ENCODE measurements at regions of chr6 and their contacts with region 1.

Region 1: DNA sequence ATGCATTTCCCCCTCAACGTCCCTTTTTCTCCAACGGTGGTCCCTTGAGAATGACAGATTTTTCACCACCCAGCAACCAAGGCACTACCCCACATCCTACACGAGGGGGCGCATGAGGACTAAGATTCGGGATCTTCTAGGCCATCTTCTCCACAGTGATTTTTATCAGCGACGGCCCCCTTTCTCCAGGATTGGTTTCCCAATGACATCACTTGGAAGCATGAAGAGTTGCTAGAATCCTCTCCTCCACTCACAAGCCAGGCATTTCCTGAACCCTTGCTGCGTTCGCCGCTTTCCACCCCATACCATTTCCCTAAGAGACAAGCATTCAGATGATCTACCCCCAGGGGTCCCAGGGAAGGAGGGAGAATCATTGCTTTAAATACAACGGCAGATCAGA is 252.0 kb downstream of the HIVEP2 start:
- DNase-seq: peak in 3 of 4 donors; percentile 59 to 75 (median 65)
- ATAC-seq: peak; percentile 86
- H3K4me3 ChIP-seq: no peak overlapping the region
- H3K27ac ChIP-seq: no peak overlapping the region
- H3K4me1 ChIP-seq: peaks cover 5 to 29% of the 10 kb centered on the region in 2 donors
- H3K27me3 ChIP-seq: no peaks in the 10 kb centered on the region
- CTCF ChIP-seq: peak; percentile 85

Region 2: DNA sequence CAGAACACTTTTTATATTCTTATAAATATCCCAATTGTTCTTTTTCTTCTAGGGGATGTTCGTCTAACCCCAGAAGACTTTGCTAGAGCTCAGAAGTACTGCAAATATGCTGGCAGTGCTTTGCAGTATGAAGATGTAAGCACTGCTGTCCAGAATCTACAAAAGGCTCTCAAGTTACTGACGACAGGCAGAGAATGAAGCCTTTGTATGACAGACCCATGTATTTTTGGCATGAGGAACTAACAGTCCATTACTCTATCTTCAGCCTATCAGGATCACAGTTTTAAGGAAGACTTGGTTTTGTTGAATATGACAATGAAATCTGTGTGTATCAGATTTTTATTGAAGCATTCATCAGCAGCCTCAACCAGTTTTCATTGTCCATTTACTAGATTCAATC is 474.5 kb before region 1 on chr6:
- intact Hi-C with region 1: no loop called
- DNase-seq: no peak
- ATAC-seq: no peak
- H3K4me3 ChIP-seq: no peak overlapping the region
- H3K27ac ChIP-seq: no peak overlapping the region
- H3K4me1 ChIP-seq: no peaks in the 10 kb centered on the region
- H3K27me3 ChIP-seq: no peaks in the 10 kb centered on the region
- CTCF ChIP-seq: no peak

Region 3: DNA sequence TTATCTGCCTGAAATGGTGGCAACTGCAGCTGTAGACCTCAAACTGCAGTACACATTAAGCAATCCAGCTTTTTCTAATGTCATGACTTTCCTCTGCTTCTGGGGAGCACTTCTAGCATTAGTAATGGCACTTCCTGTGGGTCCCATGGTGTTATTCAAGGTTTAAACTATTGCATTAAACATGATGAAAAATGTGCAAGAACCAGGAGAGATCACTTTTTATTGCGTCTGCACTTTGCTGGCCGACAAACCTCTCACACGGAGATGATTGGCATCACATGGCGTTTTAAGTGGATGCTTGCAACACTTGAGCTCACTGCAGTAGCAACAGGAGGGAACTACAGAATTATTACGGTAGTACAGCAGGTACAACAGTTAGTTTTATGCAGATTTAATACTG is 103.6 kb after region 1 on chr6:
- intact Hi-C with region 1: no loop called
- DNase-seq: peak in 2 of 4 donors; percentile 44 to 54
- ATAC-seq: peak; percentile 92
- H3K4me3 ChIP-seq: no peak overlapping the region
- H3K27ac ChIP-seq: peak overlapping the region in 1 of 2 donors; percentile 53
- H3K4me1 ChIP-seq: peaks cover 0 to 8% of the 10 kb centered on the region in 2 donors
- H3K27me3 ChIP-seq: no peaks in the 10 kb centered on the region
- CTCF ChIP-seq: no peak

Region 4: DNA sequence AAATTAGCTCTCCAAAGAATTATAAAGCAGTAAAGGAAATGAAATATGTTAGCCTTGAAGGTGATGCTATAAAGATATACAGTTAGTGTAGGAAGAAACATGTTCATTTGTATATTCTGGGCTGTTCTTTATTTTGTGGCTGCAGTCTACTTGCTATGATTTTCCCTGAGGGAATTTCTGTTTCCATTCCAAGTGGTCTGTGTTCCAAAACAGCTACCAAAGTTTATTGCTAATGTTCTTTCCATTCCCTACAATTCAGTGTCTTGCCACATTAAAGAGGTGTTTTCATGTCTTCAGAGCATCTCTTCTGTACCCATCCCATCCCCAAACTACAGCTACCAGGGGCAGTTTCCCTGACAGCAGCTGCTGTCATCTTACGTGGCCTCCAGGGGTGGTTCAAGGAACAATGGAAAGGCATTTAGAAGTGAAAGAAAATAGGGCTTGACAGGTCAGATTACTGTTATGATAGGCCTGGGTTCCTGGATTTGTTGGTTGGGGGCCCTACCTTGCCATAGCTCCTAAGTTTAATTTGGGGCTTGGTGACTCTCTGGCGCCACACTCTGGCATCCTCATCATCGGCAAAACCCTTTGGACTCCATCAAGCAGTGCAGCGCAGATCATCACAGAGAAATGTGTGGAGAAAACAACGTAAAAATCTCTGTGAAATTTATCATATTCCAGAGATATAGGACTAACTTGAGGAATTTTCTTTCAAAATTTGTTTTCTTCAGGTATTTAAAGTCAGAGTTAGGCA is 333.9 kb after region 1 on chr6:
- intact Hi-C with region 1: loop called in 1 of 2 experiments (anchors 5 kb)
- DNase-seq: peak in 1 of 4 donors; percentile 11
- ATAC-seq: peak; percentile 80
- H3K4me3 ChIP-seq: no peak overlapping the region
- H3K27ac ChIP-seq: no peak overlapping the region
- H3K4me1 ChIP-seq: no peaks in the 10 kb centered on the region
- H3K27me3 ChIP-seq: no peaks in the 10 kb centered on the region
- CTCF ChIP-seq: peak; percentile 52 to 61

Region 5: DNA sequence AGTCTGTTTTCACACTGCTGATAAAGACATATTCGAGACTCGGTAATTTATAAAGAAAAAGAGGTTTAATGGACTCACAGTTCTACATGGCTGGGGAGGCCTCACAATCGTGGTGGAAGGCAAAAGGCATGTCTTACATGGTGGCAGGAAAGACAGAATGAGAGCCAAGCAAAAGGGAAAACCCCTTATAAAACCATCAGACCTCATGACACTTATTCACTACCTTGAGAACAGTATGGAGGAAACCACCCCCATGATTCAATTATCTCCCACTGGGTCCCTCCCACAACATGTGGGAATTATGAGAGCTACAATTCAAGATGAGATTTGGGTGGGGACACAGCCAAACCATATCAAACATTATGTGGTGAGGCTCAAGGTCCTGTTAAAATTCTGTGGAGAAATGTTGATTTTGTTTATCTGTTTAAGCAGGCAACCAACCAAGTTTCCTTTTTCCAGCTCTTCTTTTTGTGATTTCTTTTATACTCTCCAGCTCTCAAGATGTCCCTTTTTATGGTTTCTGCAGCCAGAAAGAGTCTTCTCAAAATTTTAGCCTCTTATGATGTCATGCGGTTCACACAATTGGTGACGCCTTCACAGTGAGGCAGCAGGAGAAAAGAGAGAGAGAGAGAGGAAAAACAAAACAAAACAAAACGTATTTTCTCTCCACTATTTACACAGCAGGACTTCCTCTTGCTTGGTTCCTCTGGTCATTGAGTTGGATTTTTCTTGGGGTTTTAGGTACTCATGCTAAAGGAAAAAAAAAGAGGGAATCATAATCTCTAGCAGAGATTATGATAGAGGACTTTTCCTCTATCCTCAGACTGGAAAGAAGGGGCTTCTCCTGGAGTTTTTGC is 385.8 kb after region 1 on chr6:
- intact Hi-C with region 1: no loop called
- DNase-seq: no peak
- ATAC-seq: no peak
- H3K4me3 ChIP-seq: no peak overlapping the region
- H3K27ac ChIP-seq: no peak overlapping the region
- H3K4me1 ChIP-seq: no peaks in the 10 kb centered on the region
- H3K27me3 ChIP-seq: no peaks in the 10 kb centered on the region
- CTCF ChIP-seq: no peak

Region 6: DNA sequence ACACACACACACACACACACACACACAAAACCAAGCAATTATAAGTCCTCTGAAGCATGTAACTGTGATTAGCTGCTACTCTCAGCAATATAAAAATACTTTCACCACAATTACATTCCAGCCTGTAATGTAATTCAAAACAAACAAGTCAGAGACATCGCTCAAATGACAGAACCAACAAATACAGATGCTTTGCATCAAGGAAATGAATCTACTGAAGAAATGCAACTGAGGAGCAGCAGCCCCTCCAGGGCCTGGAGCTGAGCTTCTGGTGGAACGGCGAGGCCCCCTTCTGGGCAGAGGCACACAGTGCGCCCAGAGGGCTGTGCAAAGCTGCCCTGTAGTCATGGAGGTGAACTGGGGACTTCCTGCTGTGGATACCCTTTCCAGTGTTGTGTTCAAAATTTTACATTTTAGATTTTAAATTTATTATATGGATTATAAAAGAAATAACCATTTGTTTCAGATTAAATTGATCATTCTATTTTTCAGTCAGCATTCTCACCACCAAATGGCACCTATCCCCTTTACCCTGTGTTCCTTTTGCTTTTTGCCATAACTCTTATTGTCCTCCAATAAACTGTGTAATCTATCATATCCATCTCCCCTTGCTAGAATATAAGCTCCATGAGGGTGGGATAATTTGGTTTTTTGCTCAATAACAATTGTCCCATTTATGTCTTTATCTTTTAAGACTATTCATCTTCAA is 734.3 kb after region 1 on chr6:
- intact Hi-C with region 1: loop called in 1 of 2 experiments (anchors 10 kb)
- DNase-seq: peak; percentile 67 to 94 (median 86)
- ATAC-seq: peak; percentile 100
- H3K4me3 ChIP-seq: no peak overlapping the region
- H3K27ac ChIP-seq: no peak overlapping the region
- H3K4me1 ChIP-seq: no peaks in the 10 kb centered on the region
- H3K27me3 ChIP-seq: no peaks in the 10 kb centered on the region
- CTCF ChIP-seq: peak; percentile 87 to 91